ENCODE measurements at regions of chr19 and their contacts with region 1.

Region 1: GRCh38 chr19:46542428-46543230 is 47.0 kb upstream of the PNMA8B start:
- DNase-seq: peak; percentile 65 to 90 (median 76)
- ATAC-seq: peak; percentile 68
- H3K4me3 ChIP-seq: no peak overlapping the region
- H3K4me3 Mint-ChIP-seq: no peak overlapping the region
- H3K27ac ChIP-seq: no peak overlapping the region
- H3K27ac Mint-ChIP-seq: no peak overlapping the region
- H3K4me1 ChIP-seq: peaks cover 13% of the 10 kb centered on the region
- H3K4me1 Mint-ChIP-seq: peaks cover 7% of the 10 kb centered on the region
- H3K27me3 ChIP-seq: no peaks in the 10 kb centered on the region
- H3K27me3 Mint-ChIP-seq: peaks cover 3% of the 10 kb centered on the region
- CTCF ChIP-seq: peak; percentile 97

Region 2: DNA sequence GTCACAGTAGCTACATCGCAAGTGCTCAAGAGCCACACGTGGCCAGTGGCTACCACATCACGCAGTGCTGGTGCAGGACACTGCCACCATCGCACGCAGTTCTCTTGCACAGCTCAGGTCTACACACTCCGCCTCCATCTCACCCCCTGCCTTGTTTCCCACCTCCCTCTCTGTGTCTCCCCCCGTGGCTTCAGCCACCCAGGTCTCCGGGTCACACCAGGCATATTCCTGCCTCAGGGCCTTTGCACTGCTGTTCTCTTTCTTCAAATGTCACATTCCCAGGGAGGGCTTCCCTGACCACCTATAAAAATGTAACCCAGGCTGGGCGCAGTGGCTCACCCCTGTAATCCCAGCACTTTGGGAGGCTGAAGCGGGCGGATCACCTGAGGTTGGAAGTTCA is 139.9 kb before region 1 on chr19:
- CTCF ChIA-PET with region 1: no interaction called
- POLR2A ChIA-PET with region 1: no interaction called
- intact Hi-C with region 1: loop called in 1 of 2 experiments (anchors 2 kb)
- DNase-seq: no peak
- ATAC-seq: no peak
- H3K4me3 ChIP-seq: no peak overlapping the region
- H3K4me3 Mint-ChIP-seq: no peak overlapping the region
- H3K27ac ChIP-seq: no peak overlapping the region
- H3K27ac Mint-ChIP-seq: no peak overlapping the region
- H3K4me1 ChIP-seq: peaks cover 20% of the 10 kb centered on the region
- H3K4me1 Mint-ChIP-seq: peaks cover 18% of the 10 kb centered on the region
- H3K27me3 ChIP-seq: peaks cover 48 to 57% of the 10 kb centered on the region in 2 experiments
- H3K27me3 Mint-ChIP-seq: peaks cover 74% of the 10 kb centered on the region
- CTCF ChIP-seq: no peak

Region 3: GRCh38 chr19:46579361-46579879 is 36.8 kb after region 1 on chr19:
- CTCF ChIA-PET with region 1: no interaction called
- POLR2A ChIA-PET with region 1: no interaction called
- intact Hi-C with region 1: no loop called
- DNase-seq: peak in 10 of 14 experiments; percentile 5 to 53 (median 26)
- ATAC-seq: no peak
- H3K4me3 ChIP-seq: no peak overlapping the region
- H3K4me3 Mint-ChIP-seq: no peak overlapping the region
- H3K27ac ChIP-seq: no peak overlapping the region
- H3K27ac Mint-ChIP-seq: no peak overlapping the region
- H3K4me1 ChIP-seq: peaks cover 15% of the 10 kb centered on the region
- H3K4me1 Mint-ChIP-seq: peaks cover 24% of the 10 kb centered on the region
- H3K27me3 ChIP-seq: no peaks in the 10 kb centered on the region
- H3K27me3 Mint-ChIP-seq: no peaks in the 10 kb centered on the region
- CTCF ChIP-seq: no peak

Region 4: GRCh38 chr19:46618670-46619231 is 76.1 kb after region 1 on chr19:
- CTCF ChIA-PET with region 1: no interaction called
- POLR2A ChIA-PET with region 1: no interaction called
- intact Hi-C with region 1: no loop called
- DNase-seq: peak in 3 of 14 experiments; percentile 25 to 77 (median 74)
- ATAC-seq: peak; percentile 16
- H3K4me3 ChIP-seq: no peak overlapping the region
- H3K4me3 Mint-ChIP-seq: peak overlapping the region; percentile 65
- H3K27ac ChIP-seq: peak overlapping the region in 1 of 2 donors; percentile 71
- H3K27ac Mint-ChIP-seq: peak overlapping the region; percentile 89
- H3K4me1 ChIP-seq: peaks cover 88% of the 10 kb centered on the region
- H3K4me1 Mint-ChIP-seq: peaks cover 59% of the 10 kb centered on the region
- H3K27me3 ChIP-seq: no peaks in the 10 kb centered on the region
- H3K27me3 Mint-ChIP-seq: no peaks in the 10 kb centered on the region
- CTCF ChIP-seq: no peak

Measured in CD4-positive, alpha-beta T cell (primary cell).